OCI-LY7 (cell line): ENCODE measurements at regions of chr9 and their contacts with region 1.

Region 1: DNA sequence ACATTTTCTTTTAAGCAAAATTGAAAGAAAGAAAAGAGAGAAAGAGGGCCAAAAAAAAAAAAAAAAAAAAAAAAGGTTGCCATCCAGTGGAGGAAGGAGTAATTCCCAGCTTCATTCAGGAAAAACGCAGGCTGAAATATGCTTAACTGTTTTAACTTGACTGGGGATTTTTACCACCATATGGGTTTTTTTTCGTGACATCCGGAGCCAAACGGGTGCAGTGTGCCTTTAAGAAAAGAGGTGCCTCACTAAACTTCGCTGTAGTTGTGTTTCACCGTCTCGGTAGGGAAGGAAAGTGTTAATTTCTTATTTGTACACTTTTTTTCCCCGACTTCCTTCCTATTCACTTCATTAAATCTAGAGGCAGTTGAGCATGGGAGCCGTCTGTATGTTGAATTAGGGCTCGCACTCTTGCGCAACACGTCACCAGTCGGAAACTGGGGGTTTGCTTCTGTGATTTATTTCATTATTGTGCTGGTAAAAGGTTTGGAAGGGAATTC is 143.0 kb downstream of the SMARCA2 start:
- DNase-seq: peak; percentile 89
- H3K4me3 ChIP-seq: peak overlapping the region; percentile 75
- H3K27ac ChIP-seq: peak overlapping the region; percentile 72
- H3K4me1 ChIP-seq: peaks cover 24% of the 10 kb centered on the region
- CTCF ChIP-seq: peak; percentile 20; the same call in 1 of the 2 replicates

Region 2: GRCh38 chr9:2255128-2255527 is 97.0 kb after region 1 on chr9:
- CTCF ChIA-PET with region 1: no interaction called
- POLR2A ChIA-PET with region 1: interaction called, 3 read pairs
- intact Hi-C with region 1: loop called (anchors 5 kb)
- DNase-seq: no peak
- H3K4me3 ChIP-seq: no peak overlapping the region
- H3K27ac ChIP-seq: no peak overlapping the region
- H3K4me1 ChIP-seq: peaks cover 41% of the 10 kb centered on the region
- CTCF ChIP-seq: peak; percentile 27; the same call in 1 of the 2 replicates

Region 3: GRCh38 chr9:2317601-2318000 is 159.4 kb after region 1 on chr9:
- CTCF ChIA-PET with region 1: no interaction called
- POLR2A ChIA-PET with region 1: no interaction called
- intact Hi-C with region 1: no loop called
- DNase-seq: no peak
- H3K4me3 ChIP-seq: no peak overlapping the region
- H3K27ac ChIP-seq: no peak overlapping the region
- H3K4me1 ChIP-seq: no peaks in the 10 kb centered on the region
- CTCF ChIP-seq: no peak

Region 4: DNA sequence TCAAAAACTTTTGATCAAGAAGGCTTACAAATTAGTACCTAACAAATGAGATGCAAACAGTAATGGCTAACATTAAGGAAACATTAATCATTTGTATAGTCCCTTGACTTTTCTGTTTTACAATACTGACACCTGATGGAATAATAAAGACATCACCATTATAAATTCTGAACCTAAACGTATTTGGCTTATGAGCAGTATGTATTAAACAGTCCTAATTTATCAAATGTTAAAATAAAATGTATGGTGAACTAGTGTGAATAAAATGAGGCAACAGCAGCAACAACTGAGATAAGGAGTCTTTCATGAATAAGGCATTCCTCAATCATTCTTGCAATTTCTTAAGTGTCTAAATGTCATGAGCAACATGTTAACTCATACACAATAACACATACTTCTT is 679.8 kb after region 1 on chr9:
- CTCF ChIA-PET with region 1: no interaction called
- POLR2A ChIA-PET with region 1: no interaction called
- intact Hi-C with region 1: loop called (anchors 5 kb)
- DNase-seq: no peak
- H3K4me3 ChIP-seq: no peak overlapping the region
- H3K27ac ChIP-seq: no peak overlapping the region
- H3K4me1 ChIP-seq: peaks cover 38% of the 10 kb centered on the region
- CTCF ChIP-seq: peak; percentile 64